AG04449 (cell line): ENCODE measurements at regions of chr17 and their contacts with region 1.

Region 1: GRCh38 chr17:48878918-48879898 is 13.4 kb upstream of the ATP5MC1 start:
- DNase-seq: no peak
- H3K4me3 ChIP-seq: no peak overlapping the region
- CTCF ChIP-seq: peak; percentile 85

Region 2: GRCh38 chr17:48704361-48705248 is 174.6 kb before region 1 on chr17:
- CTCF ChIA-PET with region 1: interaction called, 10 read pairs
- POLR2A ChIA-PET with region 1: no interaction called
- DNase-seq: no peak
- H3K4me3 ChIP-seq: no peak overlapping the region
- CTCF ChIP-seq: no peak

Region 3: DNA sequence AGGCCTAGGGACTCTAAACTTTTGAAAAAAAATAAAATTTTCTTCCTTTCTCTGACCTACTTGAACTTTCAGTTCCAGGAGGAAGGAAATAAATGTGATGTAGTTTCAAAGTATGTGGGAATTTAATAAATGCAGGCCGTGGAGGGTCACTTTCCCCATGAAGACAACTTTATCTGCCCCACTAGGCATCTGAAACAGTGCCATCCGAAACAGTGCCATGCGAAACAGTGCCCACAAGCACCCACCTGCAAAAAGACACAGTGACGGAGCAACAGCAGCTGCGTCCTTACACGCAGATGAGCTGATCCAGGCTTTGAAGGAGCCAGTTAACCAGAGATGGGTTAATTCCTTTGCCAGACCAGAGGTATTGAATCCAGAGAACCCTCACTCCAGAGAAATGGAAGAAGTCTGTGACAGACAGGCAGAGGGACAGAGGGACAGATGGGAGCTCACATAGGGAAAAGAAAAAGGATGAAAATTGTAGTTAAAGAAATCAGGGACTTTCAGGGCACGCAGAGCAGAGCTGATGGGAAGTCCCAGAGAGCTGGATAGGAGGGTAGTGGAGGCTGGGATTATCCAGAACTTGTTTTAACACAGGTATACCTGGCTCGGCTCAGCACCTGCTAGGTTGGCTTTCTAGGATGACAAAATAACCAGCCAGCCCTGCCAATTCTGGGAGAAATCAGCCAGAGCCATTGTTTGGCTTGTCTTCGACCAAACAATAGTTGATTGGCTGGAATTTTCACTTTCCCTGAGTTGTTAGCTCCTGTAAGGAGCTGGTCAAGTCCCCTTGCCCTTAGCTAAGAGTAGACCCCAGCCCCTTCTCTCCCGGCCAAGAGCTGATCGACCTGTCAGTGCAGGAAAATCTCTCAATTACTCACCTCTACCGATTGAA is 133.6 kb before region 1 on chr17:
- CTCF ChIA-PET with region 1: interaction called, 13 read pairs
- POLR2A ChIA-PET with region 1: no interaction called
- DNase-seq: no peak
- H3K4me3 ChIP-seq: no peak overlapping the region
- CTCF ChIP-seq: no peak

Region 4: DNA sequence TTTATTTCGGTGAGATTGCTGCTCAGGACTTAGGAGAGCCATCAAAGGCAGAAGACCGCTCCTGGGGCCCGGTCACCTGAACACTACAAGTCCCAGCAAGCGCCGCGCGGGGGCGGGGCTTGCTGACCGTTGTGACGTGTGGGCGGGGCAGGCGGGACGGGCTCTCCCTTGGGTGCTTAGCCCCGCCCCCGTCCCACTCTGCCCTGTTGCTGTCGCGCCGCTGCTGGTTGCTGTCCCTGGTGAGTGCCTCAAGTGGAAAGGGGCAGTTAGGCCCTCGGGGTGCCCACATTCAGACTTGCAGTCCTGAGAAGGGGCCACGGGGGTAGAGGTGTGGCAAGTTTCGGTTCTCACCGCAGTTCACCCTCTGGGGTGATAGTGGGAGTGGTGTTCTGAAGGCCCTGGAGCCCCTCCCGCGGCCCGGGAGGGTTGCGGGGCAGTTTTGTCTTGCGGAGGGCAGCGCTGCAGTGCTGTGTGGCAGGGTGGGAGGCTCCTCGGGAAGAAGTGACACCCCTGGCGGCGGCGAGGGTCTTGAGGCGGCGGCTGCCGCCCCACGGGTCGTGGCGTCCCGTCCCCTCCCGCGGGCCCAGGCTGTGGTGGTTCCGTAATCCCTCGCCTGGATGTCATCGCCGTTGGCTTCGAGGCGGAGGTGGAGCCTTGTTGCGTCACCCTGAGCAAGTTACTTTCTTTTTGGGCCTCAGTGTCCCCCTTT is 48.2 kb before region 1 on chr17 and contains the start of gene CALCOCO2:
- CTCF ChIA-PET with region 1: interaction called, 797 read pairs
- POLR2A ChIA-PET with region 1: no interaction called
- DNase-seq: peak; percentile 42
- H3K4me3 ChIP-seq: peak within 1 kb of the TSS; percentile 100
- CTCF ChIP-seq: no peak

Region 5: GRCh38 chr17:48850792-48851323 is 28.4 kb before region 1 on chr17:
- CTCF ChIA-PET with region 1: interaction called, 37 read pairs
- POLR2A ChIA-PET with region 1: no interaction called
- DNase-seq: no peak
- H3K4me3 ChIP-seq: no peak overlapping the region
- CTCF ChIP-seq: no peak

Region 6: GRCh38 chr17:49031965-49032928 is 153.0 kb after region 1 on chr17:
- CTCF ChIA-PET with region 1: interaction called, 58 read pairs
- POLR2A ChIA-PET with region 1: no interaction called
- DNase-seq: no peak
- H3K4me3 ChIP-seq: no peak overlapping the region
- CTCF ChIP-seq: peak; percentile 73